Heart right ventricle (tissue), 16 donors: ENCODE measurements at regions of chr15 and their contacts with region 1.

Region 1: DNA sequence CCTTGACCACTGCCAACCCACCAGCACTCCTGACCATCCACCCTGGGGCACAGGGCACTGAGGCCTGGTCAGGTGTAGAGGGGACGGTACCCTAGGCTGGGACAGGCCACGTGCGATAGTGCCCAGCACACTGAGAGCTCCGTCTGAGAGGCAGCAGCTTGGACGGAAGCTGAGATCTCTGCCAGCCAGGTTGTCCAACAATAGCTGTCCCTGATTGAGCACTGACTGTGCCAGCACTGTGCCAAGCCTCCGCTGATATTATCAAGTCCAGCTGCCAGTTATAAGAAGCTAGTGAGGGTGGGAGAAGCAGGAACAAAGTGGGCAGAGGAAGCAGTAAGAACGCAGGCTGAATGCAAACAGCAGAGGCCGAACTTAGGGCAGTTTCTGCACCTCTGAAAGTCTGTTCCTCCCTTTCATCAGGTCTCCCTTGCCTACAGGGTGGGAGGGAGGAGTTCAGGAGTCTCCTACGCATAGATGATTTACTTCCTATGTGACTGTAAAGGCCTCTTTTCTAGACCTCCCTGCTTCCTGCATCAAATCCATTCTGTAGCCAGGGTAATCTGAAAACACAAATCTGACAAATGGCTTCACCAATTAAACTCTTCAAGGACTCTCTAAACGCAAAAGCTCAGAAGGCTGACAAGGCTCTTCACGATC is 29.7 kb downstream of the MRPS11 start:
- DNase-seq: peak; percentile 51 to 63
- ATAC-seq: peak; percentile 45 to 94 (median 86)
- H3K4me3 ChIP-seq: no peak overlapping the region
- H3K27ac ChIP-seq: peak overlapping the region; percentile 6 to 80 (median 63)
- H3K4me1 ChIP-seq: peaks cover 0 to 35% (median 7%) of the 10 kb centered on the region in 9 donors
- H3K27me3 ChIP-seq: no peaks in the 10 kb centered on the region
- CTCF ChIP-seq: no peak

Region 2: GRCh38 chr15:87944050-87944449 is 553.2 kb before region 1 on chr15:
- intact Hi-C with region 1: no loop called
- DNase-seq: no peak
- ATAC-seq: no peak
- H3K4me3 ChIP-seq: no peak overlapping the region
- H3K27ac ChIP-seq: peak overlapping the region in 3 of 10 donors; percentile 12 to 44 (median 20)
- H3K4me1 ChIP-seq: peaks cover 0 to 35% (median 7%) of the 10 kb centered on the region in 9 donors
- H3K27me3 ChIP-seq: no peaks in the 10 kb centered on the region
- CTCF ChIP-seq: no peak

Region 3: DNA sequence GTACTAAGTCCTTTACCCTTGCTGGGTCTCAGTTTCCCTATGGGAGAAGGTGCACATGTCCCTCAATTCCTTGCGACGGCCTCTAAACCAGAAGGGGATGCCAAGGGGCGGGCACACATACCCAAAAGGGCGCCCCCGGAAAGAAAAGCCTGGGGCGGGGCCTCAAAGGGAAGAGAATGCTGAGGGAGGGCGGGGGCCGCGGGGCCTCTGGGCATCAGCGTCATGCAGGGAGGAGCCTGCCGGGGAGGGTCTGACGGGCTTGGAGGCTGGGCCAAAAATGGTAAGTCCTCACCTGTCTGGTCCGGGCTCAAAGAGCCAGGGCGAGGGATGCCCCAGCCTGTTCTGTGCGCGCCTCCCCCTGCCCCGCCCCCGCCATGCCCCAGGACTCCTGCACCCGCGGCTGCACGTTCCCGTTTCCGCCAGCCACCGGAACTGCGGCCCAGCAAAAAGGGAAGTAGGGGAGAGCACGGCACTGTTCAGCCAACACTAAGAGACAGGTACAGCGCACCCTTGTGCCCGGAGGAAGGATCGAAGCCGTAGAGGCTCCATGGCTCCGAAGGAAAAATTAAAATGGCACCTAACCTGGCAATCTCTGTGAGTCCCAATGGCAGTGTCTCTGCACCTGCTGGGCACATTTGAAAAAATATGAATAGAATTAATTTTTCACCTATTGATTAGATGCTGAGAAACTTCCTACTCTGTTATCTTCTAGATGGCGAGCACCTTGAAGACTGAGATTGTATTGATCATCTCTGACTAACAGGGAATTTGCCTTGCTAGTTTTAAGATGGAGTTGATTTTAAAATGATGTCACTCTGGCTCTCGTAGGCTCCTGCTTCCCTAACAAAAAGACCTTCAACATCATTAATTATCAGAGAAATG is 49.3 kb after region 1 on chr15 and contains the start of gene DET1:
- intact Hi-C with region 1: loop called in 1 of 10 experiments (anchors 1 kb)
- DNase-seq: peak; percentile 93 to 96
- ATAC-seq: peak; percentile 97 to 100 (median 99)
- H3K4me3 ChIP-seq: peak within 1 kb of the TSS; percentile 45 to 88 (median 75)
- H3K27ac ChIP-seq: peak within 1 kb of the TSS; percentile 86 to 97 (median 94)
- H3K4me1 ChIP-seq: peaks cover 6 to 49% (median 27%) of the 10 kb centered on the region in 9 donors
- H3K27me3 ChIP-seq: no peaks in the 10 kb centered on the region
- CTCF ChIP-seq: peak; percentile 66 to 91 (median 77)
- total RNA-seq, gene DET1: 6.5 to 10.5 (median 8.7) TPM